ENCODE measurements at regions of chr14 and their contacts with region 1.

Region 1: DNA sequence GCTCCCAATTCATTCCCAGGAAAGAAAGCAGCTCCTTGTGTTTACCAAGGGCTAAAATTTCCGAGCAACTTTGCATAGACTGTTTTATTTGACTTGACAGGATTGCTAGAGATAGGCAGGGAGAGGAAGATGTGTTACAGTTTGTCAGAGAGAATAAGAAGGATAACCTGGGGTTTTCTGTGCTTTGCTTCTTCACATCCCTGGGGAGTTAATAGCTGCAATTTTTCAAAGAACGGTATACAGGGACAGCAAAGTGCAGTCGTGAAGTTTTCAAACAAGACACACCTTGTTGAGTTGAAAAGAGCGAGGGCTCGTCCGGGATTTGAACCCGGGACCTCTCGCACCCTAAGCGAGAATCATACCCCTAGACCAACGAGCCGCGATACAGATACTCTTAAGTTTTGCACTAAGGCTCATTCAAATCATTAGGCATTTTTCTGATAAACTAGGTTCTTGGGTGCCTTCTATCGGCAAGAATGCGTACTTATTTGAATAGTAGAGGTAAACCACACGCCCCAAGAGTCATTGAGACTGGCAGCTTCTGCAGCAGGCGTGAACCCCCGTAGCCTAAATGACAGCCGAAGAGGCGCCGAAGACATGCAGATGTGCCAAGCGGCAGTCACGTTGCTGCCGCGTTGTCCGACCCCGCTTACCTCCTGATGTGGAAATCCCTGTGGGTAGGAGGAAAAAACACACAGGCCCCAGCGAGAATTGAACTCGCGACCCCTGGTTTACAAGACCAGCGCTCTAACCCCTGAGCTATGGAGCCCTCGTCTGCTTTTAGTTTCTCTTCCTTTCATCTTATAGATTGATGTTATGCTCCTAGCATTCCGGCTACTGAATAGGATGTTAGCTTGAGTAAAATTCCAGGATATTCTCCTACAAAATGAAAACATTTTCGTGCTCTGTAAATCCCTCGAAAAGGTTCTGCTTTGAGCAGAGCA is 22.2 kb upstream of the RNASE12 start:
- DNase-seq: peak; percentile 61 to 95 (median 92)
- ATAC-seq: peak; percentile 89
- H3K4me3 ChIP-seq: peak overlapping the region; percentile 64
- H3K4me3 Mint-ChIP-seq: no peak overlapping the region
- H3K27ac ChIP-seq: peak overlapping the region; percentile 30
- H3K27ac Mint-ChIP-seq: no peak overlapping the region
- H3K4me1 ChIP-seq: peaks cover 20 to 29% of the 10 kb centered on the region in 2 donors
- H3K4me1 Mint-ChIP-seq: peaks cover 0 to 26% (median 4%) of the 10 kb centered on the region in 7 donors
- H3K27me3 ChIP-seq: no peaks in the 10 kb centered on the region
- H3K27me3 Mint-ChIP-seq: peaks cover 0 to 6% (median 0%) of the 10 kb centered on the region in 5 donors

Region 2: GRCh38 chr14:20327005-20327869 is 286.1 kb before region 1 on chr14:
- CTCF ChIA-PET with region 1: interaction called, 104 read pairs
- POLR2A ChIA-PET with region 1: interaction called, 26 read pairs
- intact Hi-C with region 1: loop called (anchors 1 kb)
- DNase-seq: peak in 7 of 9 donors; percentile 44 to 74 (median 66)
- ATAC-seq: peak; percentile 81
- H3K4me3 ChIP-seq: no peak overlapping the region
- H3K4me3 Mint-ChIP-seq: peak overlapping the region in 5 of 10 donors; percentile 2 to 52 (median 26)
- H3K27ac ChIP-seq: no peak overlapping the region
- H3K27ac Mint-ChIP-seq: peak overlapping the region; percentile 35 to 93 (median 66)
- H3K4me1 ChIP-seq: peaks cover 0 to 4% of the 10 kb centered on the region in 2 donors
- H3K4me1 Mint-ChIP-seq: peaks cover 9 to 42% (median 27%) of the 10 kb centered on the region in 7 donors
- H3K27me3 ChIP-seq: no peaks in the 10 kb centered on the region
- H3K27me3 Mint-ChIP-seq: no peaks in the 10 kb centered on the region

Region 3: DNA sequence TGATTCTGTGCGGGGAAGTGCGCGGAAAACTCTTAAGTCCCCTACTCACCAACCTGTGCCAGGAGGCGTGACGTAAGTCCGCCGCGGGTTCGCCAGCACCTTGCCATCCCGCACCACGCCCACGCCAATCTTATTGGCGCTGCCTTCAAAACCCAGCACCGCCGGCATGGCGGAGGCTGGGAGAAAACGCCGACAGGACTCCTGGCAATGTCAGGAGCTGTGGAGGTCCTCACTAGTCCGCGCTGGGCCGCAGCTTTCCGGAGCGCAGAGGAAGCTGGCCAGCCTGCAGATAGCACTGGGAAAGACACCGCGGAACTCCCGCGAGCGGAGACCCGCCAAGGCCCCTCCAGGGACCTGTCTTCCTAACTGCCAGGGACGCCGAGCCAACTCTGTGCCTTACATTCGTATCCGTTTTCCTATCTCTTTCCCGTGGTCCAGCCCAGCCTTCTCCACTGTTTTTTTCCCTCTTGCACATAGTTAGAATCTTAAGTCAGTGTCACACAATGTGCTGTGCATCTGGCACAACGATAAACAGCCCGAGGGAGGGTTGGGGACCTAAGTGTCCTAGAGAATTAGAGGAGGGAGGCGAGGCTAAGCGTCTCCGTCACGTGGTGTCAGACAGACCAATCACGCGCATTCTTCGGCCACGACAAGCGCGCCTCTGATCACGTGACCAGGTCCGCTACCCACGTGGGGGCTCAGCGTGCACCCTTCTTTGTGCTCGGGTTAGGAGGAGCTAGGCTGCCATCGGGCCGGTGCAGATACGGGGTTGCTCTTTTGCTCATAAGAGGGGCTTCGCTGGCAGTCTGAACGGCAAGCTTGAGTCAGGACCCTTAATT is 158.6 kb before region 1 on chr14 and contains the starts of genes APEX1 and OSGEP:
- CTCF ChIA-PET with region 1: interaction called, 3 read pairs
- POLR2A ChIA-PET with region 1: interaction called, 6 read pairs
- intact Hi-C with region 1: loop called (anchors 1 kb)
- DNase-seq: peak; percentile 86 to 99 (median 98)
- ATAC-seq: peak; percentile 88
- H3K4me3 ChIP-seq: peak within 1 kb of the TSS; percentile 80
- H3K4me3 Mint-ChIP-seq: peak within 1 kb of the TSS in 6 of 10 donors; percentile 7 to 43 (median 30)
- H3K27ac ChIP-seq: peak within 1 kb of the TSS; percentile 85
- H3K27ac Mint-ChIP-seq: no peak within 1 kb of the TSS
- H3K4me1 ChIP-seq: peaks cover 13 to 18% of the 10 kb centered on the region in 2 donors
- H3K4me1 Mint-ChIP-seq: peaks cover 12 to 30% (median 19%) of the 10 kb centered on the region in 7 donors
- H3K27me3 ChIP-seq: no peaks in the 10 kb centered on the region
- H3K27me3 Mint-ChIP-seq: no peaks in the 10 kb centered on the region
- total RNA-seq, gene APEX1: 97.4 to 159 (median 129) TPM
- total RNA-seq, gene OSGEP: 54.2 to 77.2 (median 69.1) TPM

Region 4: DNA sequence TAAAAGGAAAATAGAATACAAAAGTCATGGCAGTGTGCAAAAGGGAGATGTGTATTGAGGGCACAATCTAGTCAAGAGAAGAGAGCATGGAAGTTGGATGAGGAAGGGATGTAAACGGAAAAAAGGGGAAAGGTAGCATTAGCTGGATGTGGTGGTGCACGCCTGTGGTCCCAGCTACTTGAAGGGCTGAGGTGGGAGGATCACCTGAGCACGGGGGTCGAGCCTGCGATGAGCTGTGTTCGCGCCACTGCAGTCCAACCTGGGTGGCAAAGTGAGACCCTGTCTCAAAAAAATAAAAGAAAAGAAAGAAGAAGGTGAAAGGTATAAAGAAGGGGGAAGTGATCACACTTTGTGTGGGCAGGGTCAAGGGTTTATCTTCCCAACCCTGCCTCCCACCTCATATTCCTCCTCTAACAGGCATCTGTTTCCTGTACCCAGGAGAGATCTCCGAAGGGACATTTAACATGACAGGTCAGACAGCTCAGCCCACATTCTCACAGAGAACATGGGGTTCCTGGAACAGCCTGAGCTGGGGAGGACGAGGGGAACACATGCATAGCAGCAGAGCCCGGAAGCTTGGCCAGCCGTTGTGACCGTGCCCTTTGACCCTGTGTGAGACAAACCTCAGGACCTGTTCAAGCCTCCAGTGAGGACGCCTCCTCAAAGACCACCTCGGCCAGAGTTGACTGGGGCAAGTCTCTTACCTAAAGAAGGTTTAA is 34.4 kb before region 1 on chr14:
- CTCF ChIA-PET with region 1: no interaction called
- POLR2A ChIA-PET with region 1: no interaction called
- intact Hi-C with region 1: no loop called
- DNase-seq: no peak
- ATAC-seq: no peak
- H3K4me3 ChIP-seq: no peak overlapping the region
- H3K4me3 Mint-ChIP-seq: no peak overlapping the region
- H3K27ac ChIP-seq: no peak overlapping the region
- H3K27ac Mint-ChIP-seq: peak overlapping the region in 1 of 9 donors; percentile 51
- H3K4me1 ChIP-seq: no peaks in the 10 kb centered on the region
- H3K4me1 Mint-ChIP-seq: no peaks in the 10 kb centered on the region
- H3K27me3 ChIP-seq: no peaks in the 10 kb centered on the region
- H3K27me3 Mint-ChIP-seq: peaks cover 0 to 8% (median 0%) of the 10 kb centered on the region in 5 donors

Region 5: DNA sequence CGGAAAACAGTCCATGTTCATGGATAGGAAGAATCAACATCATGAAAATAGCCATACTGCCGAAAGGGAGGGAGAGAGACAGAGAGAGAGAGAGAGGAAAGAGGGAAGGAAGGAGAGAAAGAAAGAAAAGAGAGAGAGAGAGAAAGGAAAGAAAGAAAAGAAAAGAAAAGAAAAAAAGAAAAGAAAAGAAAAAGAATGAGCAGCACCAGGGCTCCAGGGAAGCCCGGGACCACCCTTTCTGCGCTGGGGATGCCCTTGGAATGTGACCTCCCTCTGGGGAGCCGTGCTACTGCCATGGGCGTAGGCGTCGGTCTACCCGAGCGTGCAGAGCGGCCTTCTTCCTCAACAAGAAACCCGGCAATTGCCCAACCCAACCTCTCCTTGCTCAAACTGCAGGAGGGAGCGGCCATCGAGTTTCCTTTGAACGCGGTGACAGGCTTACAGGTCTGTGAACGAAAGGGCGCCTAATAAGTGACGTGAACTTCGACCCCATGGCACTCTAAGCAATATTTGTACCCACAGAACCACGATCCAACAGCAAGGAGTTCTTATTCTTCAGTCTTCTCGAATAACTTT is 11.2 kb after region 1 on chr14:
- CTCF ChIA-PET with region 1: interaction called, 6 read pairs
- POLR2A ChIA-PET with region 1: interaction called, 5 read pairs
- intact Hi-C with region 1: loop called (anchors 1 kb)
- DNase-seq: peak in 6 of 9 donors; percentile 27 to 59 (median 36)
- ATAC-seq: peak; percentile 72
- H3K4me3 ChIP-seq: peak overlapping the region; percentile 46
- H3K4me3 Mint-ChIP-seq: peak overlapping the region; percentile 76 to 92 (median 84)
- H3K27ac ChIP-seq: no peak overlapping the region
- H3K27ac Mint-ChIP-seq: peak overlapping the region; percentile 77 to 96 (median 88)
- H3K4me1 ChIP-seq: peaks cover 0 to 32% of the 10 kb centered on the region in 2 donors
- H3K4me1 Mint-ChIP-seq: peaks cover 34 to 76% (median 70%) of the 10 kb centered on the region in 7 donors
- H3K27me3 ChIP-seq: no peaks in the 10 kb centered on the region
- H3K27me3 Mint-ChIP-seq: peaks cover 27 to 59% (median 40%) of the 10 kb centered on the region in 5 donors

Region 6: GRCh38 chr14:20682435-20683124 is 69.2 kb after region 1 on chr14:
- CTCF ChIA-PET with region 1: interaction called, 19 read pairs
- POLR2A ChIA-PET with region 1: interaction called, 73 read pairs
- intact Hi-C with region 1: loop called (anchors 1 kb)
- DNase-seq: peak; percentile 63 to 83 (median 79)
- ATAC-seq: peak; percentile 75
- H3K4me3 ChIP-seq: peak overlapping the region; percentile 98
- H3K4me3 Mint-ChIP-seq: no peak overlapping the region
- H3K27ac ChIP-seq: peak overlapping the region; percentile 91
- H3K27ac Mint-ChIP-seq: no peak overlapping the region
- H3K4me1 ChIP-seq: peaks cover 18 to 24% of the 10 kb centered on the region in 2 donors
- H3K4me1 Mint-ChIP-seq: peaks cover 14 to 35% (median 32%) of the 10 kb centered on the region in 7 donors
- H3K27me3 ChIP-seq: no peaks in the 10 kb centered on the region
- H3K27me3 Mint-ChIP-seq: no peaks in the 10 kb centered on the region

Region 7: DNA sequence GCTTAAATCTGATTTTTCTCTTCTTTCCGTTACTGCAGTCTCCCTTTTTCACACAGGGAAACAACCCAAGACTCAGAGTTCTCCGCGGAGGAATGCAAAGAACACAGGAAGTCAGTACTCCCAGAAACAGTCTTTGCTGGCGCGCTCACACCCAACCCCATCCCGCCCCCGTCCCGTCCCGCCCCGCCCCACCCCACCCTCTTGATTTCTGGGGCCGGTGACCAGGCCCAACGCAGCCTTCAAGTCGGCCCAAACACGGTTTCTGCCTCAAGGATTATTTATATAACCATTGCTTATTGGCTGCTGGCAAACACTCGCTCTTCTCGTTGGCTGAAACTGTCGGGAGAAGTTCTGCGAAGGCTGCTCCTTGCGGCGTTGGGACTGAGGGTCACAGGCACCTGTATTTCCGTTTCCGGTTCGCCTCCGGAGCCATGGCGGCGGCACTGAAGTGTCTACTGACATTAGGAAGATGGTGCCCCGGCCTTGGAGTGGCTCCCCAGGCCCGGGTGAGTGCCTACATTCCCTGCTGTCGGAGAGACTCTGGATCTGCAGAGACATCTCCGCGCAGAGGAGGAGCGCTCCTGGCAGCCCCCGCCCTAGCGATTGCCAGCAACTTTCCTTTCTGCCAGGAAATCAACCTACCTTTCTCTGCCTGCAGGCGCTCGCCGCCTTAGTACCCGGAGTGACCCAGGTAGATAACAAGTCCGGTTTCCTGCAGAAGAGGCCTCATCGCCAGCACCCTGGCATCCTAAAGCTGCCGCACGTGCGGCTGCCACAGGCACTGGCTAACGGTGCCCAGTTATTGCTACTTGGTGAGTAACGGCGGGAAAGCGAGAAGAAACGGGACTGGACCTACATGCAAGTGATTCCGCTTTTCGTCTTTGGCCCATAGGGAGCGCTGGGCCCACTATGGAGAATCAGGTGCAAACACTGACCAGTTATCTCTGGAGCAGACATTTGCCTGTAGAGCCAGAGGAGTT is 376.5 kb after region 1 on chr14 and contains the start of gene METTL17:
- CTCF ChIA-PET with region 1: no interaction called
- POLR2A ChIA-PET with region 1: no interaction called
- intact Hi-C with region 1: loop called in 1 of 2 experiments (anchors 1 kb)
- DNase-seq: peak; percentile 64 to 88 (median 81)
- ATAC-seq: peak; percentile 95
- H3K4me3 ChIP-seq: peak within 1 kb of the TSS; percentile 86
- H3K4me3 Mint-ChIP-seq: peak within 1 kb of the TSS; percentile 86 to 97 (median 92)
- H3K27ac ChIP-seq: peak within 1 kb of the TSS; percentile 77
- H3K27ac Mint-ChIP-seq: peak within 1 kb of the TSS; percentile 86 to 98 (median 95)
- H3K4me1 ChIP-seq: peaks cover 12 to 16% of the 10 kb centered on the region in 2 donors
- H3K4me1 Mint-ChIP-seq: peaks cover 0 to 46% (median 37%) of the 10 kb centered on the region in 7 donors
- H3K27me3 ChIP-seq: no peaks in the 10 kb centered on the region
- H3K27me3 Mint-ChIP-seq: no peaks in the 10 kb centered on the region
- total RNA-seq, gene METTL17: 75.4 to 129 (median 96.7) TPM